Esophagus muscularis mucosa (tissue), 4 donors: ENCODE measurements at regions of chrX and their contacts with region 1.

Region 1: DNA sequence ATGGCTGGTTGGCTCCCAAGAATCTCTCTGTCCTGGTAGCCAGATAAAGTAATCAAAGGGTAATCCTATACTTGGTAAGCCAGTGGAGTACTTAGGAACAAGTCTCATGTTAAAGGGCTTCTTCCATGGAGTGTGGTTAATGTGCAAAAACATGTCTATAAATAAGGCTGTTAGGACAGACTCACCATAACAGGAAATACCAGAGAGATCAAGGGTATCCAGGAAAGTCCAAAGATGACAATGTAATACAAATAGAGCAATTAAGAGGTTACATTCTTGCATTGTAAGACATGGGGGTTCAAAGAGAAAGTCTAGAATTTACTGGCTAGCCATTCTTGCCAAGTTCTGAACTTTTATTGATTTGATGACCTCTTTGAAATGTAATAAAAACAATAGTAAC is 61.9 kb upstream of the ZCCHC13 start:
- DNase-seq: no peak
- H3K4me3 ChIP-seq: no peak overlapping the region
- H3K27ac ChIP-seq: peak overlapping the region in 2 of 4 donors; percentile 39 to 53
- H3K4me1 ChIP-seq: peaks cover 0 to 21% (median 12%) of the 10 kb centered on the region in 4 donors
- H3K27me3 ChIP-seq: no peaks in the 10 kb centered on the region
- CTCF ChIP-seq: no peak
- EP300 ChIP-seq: no peak
- POLR2A ChIP-seq: no peak

Region 2: GRCh38 chrX:74179071-74179470 is 63.0 kb before region 1 on chrX:
- intact Hi-C with region 1: no loop called
- DNase-seq: no peak
- H3K4me3 ChIP-seq: no peak overlapping the region
- H3K27ac ChIP-seq: no peak overlapping the region
- H3K4me1 ChIP-seq: peaks cover 0 to 7% (median 0%) of the 10 kb centered on the region in 4 donors
- H3K27me3 ChIP-seq: no peaks in the 10 kb centered on the region
- CTCF ChIP-seq: no peak
- EP300 ChIP-seq: no peak
- POLR2A ChIP-seq: no peak

Region 3: DNA sequence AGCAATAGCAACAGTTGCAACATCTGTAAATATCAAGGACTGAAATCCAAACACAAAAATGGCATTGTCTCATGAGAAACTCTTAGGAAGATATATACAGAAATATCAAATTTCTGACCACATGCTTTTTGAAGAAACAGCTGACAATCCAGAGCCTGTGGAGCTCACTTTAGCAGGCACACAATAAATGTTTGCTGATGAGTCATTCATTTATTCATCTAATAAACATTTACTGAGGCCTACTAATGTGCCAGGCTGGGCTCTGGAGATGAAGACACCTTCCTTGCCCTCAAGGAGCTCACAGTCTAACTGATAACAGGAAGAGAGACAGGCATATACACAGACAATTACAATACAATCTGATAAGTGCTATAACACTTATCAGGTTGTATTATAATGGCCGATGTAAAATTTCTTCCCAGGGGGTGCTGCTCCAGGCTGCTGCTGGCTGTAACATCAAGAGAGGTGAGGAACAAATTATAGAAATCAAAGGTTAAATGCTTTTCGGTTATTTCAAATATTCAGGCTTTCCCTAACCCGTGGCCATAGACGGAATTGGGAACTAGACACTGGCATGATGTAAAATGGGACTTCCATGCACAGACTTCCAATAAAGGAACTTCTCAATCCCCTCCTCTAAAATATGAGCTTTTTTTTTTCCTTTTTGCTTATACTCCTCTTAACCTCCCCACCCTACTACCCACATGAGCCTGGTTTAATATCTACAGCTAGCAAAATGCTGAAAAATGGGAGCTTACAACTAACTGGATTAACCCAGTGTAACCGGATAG is 45.1 kb after region 1 on chrX:
- intact Hi-C with region 1: loop called (anchors 5 kb)
- DNase-seq: no peak
- H3K4me3 ChIP-seq: no peak overlapping the region
- H3K27ac ChIP-seq: no peak overlapping the region
- H3K4me1 ChIP-seq: peaks cover 13 to 56% (median 49%) of the 10 kb centered on the region in 4 donors
- H3K27me3 ChIP-seq: no peaks in the 10 kb centered on the region
- CTCF ChIP-seq: no peak
- EP300 ChIP-seq: no peak
- POLR2A ChIP-seq: no peak

Region 4: DNA sequence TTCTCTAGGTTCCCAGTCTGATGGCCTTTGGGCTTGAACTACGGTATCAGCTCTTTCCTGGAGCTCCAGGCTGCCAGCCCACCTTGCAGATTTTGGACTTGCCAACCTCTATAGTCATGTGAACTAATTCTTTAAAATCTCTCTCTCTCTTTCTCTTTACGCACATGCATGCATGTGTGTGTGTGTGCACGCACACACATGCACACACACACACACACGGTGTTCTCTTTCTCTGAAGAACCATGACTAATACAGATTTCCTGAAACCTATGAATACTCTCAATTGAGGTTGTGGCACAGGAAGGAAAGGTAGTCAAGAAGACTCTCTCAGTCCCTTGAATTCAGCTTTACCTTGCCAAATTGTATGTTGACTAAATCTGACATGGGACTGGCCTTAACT is 55.7 kb after region 1 on chrX:
- intact Hi-C with region 1: no loop called
- DNase-seq: no peak
- H3K4me3 ChIP-seq: no peak overlapping the region
- H3K27ac ChIP-seq: no peak overlapping the region
- H3K4me1 ChIP-seq: peaks cover 0 to 3% (median 0%) of the 10 kb centered on the region in 4 donors
- H3K27me3 ChIP-seq: no peaks in the 10 kb centered on the region
- CTCF ChIP-seq: no peak
- EP300 ChIP-seq: no peak
- POLR2A ChIP-seq: no peak